ENCODE measurements at regions of chr4 and their contacts with region 1.

Region 1: DNA sequence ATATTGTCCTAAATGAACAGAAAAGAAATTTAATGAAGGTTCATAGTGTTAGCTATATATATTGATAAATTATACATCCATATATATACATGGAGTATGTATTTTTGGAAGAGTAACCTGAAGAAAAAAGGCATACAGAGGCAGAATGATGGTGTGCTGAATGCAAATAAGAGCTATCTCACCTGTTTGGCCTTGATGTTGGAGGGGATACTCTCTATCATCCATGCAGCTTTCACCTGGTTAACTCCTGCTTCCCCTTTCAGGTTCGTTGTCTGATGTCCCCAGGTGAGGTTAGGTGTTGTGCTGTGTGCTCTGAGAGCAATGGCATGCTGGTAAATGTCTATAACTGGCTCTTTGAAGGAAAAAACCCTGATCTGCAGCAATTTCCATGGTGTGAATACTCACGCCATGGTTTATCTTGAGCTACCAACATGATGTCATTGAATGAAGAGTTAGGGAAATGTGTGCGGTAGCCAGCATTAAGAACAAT is 31.8 kb upstream of the SPP1 start:
- DNase-seq: no peak
- CTCF ChIP-seq: no peak

Region 2: DNA sequence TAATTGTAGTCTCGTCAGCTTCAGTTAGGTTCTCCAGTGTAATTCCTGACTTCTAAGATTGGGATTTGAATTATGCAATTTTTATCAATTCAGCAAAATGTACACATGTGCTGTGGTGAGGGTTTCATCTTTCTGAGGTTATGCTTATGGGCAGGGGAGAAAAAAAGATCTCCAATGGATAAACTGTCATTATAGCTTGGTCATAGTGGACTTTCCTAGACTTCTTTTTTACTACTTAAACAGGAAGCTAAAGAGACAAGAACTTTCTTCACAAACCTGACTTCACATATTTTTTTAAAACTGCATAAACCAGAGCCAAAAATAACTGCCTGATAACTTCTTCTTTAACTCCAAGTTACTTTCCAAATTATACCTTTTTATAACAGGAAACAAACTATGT is 10.1 kb after region 1 on chr4:
- CTCF ChIA-PET with region 1: interaction called, 21 read pairs
- POLR2A ChIA-PET with region 1: no interaction called
- DNase-seq: no peak
- CTCF ChIP-seq: no peak

Region 3: GRCh38 chr4:87965501-87965975 is 21.8 kb after region 1 on chr4:
- CTCF ChIA-PET with region 1: no interaction called
- POLR2A ChIA-PET with region 1: no interaction called
- DNase-seq: no peak
- CTCF ChIP-seq: no peak

Measured in GM10248 (cell line).